A549 (cell line): ENCODE measurements at regions of chr20 and their contacts with region 1.

Region 1: GRCh38 chr20:44407402-44408184 is 52.1 kb downstream of the HNF4A start:
- DNase-seq: peak; percentile 66 to 80
- ATAC-seq: peak; percentile 62 to 81
- H3K4me3 ChIP-seq: no peak overlapping the region
- H3K27ac ChIP-seq: peak overlapping the region; percentile 48 to 76; a peak in 5 of 6 replicates
- H3K4me1 ChIP-seq: peaks cover 31% of the 10 kb centered on the region
- CTCF ChIP-seq: no peak
- EP300 ChIP-seq: no peak
- POLR2A ChIP-seq: no peak
- RAD21 ChIP-seq: no peak

Region 2: GRCh38 chr20:44394702-44395460 is 12.7 kb before region 1 on chr20:
- CTCF ChIA-PET with region 1: interaction called, 11 read pairs
- POLR2A ChIA-PET with region 1: interaction called, 3 read pairs
- DNase-seq: peak in 1 of 2 experiments; percentile 74
- ATAC-seq: peak in 1 of 2 experiments; percentile 11; a peak in 2 of 6 replicates
- H3K4me3 ChIP-seq: no peak overlapping the region
- H3K27ac ChIP-seq: peak overlapping the region; percentile 75 to 87
- H3K4me1 ChIP-seq: peaks cover 77% of the 10 kb centered on the region
- CTCF ChIP-seq: no peak
- EP300 ChIP-seq: peak; percentile 85 to 92; a peak in 3 of 5 replicates
- POLR2A ChIP-seq: no peak
- RAD21 ChIP-seq: peak in 1 of 2 experiments; percentile 11; a peak in 1 of 5 replicates